ENCODE measurements at regions of chr2 and their contacts with region 1.

Region 1: GRCh38 chr2:121071034-121071504 is 213.9 kb downstream of the TFCP2L1 start:
- DNase-seq: peak; percentile 76 to 93
- ATAC-seq: peak; percentile 74
- H3K4me3 ChIP-seq: no peak overlapping the region
- H3K27ac ChIP-seq: no peak overlapping the region
- H3K4me1 ChIP-seq: no peaks in the 10 kb centered on the region
- H3K27me3 ChIP-seq: peaks cover 0 to 3% of the 10 kb centered on the region in 2 donors

Region 2: GRCh38 chr2:120693121-120693520 is 377.9 kb before region 1 on chr2:
- intact Hi-C with region 1: loop called (anchors 1 to 2 kb)
- DNase-seq: no peak
- ATAC-seq: no peak
- H3K4me3 ChIP-seq: no peak overlapping the region
- H3K27ac ChIP-seq: no peak overlapping the region
- H3K4me1 ChIP-seq: no peaks in the 10 kb centered on the region
- H3K27me3 ChIP-seq: no peaks in the 10 kb centered on the region

Region 3: DNA sequence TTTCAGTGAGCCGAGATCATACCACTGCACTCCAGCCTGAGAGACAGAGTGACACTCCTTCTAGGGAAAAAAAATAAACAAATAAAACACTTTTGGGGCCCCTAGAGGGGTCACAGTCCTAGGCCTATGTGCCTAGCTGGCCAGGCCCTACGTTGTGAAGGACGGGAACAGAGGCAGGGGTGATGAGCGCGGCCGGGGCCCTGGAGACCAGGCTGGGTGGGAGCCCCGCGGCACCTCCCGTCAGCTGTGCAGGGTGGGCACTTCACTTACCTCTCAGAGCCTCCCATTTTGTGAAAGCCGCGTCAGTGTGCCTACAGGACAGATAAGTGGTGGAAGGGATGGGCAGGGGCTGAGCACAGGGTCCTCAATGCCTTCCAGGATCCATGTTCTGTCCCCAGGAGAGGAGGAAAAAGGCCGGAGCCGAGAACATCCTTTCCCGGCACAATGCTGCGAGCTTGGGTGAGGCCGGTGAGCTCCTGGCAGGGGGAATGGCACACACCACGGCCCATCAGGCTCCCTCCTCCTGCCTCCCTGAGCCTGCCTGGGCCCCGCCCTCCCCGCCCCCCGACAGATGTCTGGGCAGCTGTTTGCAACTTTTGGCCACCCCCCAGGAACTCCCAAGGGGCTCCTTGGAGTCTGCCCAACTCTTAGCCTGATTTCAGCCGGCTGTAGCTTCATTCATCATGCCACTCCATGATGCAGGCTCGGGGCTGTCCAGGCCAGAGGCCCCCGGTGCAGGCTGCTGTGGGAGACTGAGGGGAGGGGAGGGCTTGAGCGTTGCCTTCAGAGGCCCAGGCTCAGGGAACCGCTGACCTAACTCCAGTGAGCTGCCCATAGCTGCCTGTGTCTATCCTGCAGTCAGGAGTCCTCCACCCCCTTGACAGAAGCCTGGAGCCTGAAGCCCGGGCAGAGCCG is 17.4 kb after region 1 on chr2:
- intact Hi-C with region 1: no loop called
- DNase-seq: peak in 1 of 2 donors; percentile 80
- ATAC-seq: peak; percentile 51
- H3K4me3 ChIP-seq: no peak overlapping the region
- H3K27ac ChIP-seq: no peak overlapping the region
- H3K4me1 ChIP-seq: no peaks in the 10 kb centered on the region
- H3K27me3 ChIP-seq: no peaks in the 10 kb centered on the region